ENCODE measurements at regions of chr7 and their contacts with region 1.

Region 1: GRCh38 chr7:102050864-102051460 is 233.5 kb downstream of the CUX1 start:
- DNase-seq: no peak
- ATAC-seq: no peak
- H3K4me3 ChIP-seq: no peak overlapping the region
- H3K4me3 Mint-ChIP-seq: no peak overlapping the region
- H3K27ac ChIP-seq: no peak overlapping the region
- H3K27ac Mint-ChIP-seq: no peak overlapping the region
- H3K4me1 ChIP-seq: peaks cover 0 to 2% of the 10 kb centered on the region in 2 donors
- H3K4me1 Mint-ChIP-seq: peaks cover 41% of the 10 kb centered on the region
- H3K27me3 ChIP-seq: no peaks in the 10 kb centered on the region
- H3K27me3 Mint-ChIP-seq: no peaks in the 10 kb centered on the region
- CTCF ChIP-seq: no peak

Region 2: GRCh38 chr7:101941481-101942383 is 109.2 kb before region 1 on chr7:
- CTCF ChIA-PET with region 1: no interaction called
- POLR2A ChIA-PET with region 1: no interaction called
- intact Hi-C with region 1: no loop called
- DNase-seq: no peak
- ATAC-seq: no peak
- H3K4me3 ChIP-seq: no peak overlapping the region
- H3K4me3 Mint-ChIP-seq: no peak overlapping the region
- H3K27ac ChIP-seq: no peak overlapping the region
- H3K27ac Mint-ChIP-seq: no peak overlapping the region
- H3K4me1 ChIP-seq: peaks cover 4 to 10% of the 10 kb centered on the region in 2 donors
- H3K4me1 Mint-ChIP-seq: peaks cover 20% of the 10 kb centered on the region
- H3K27me3 ChIP-seq: no peaks in the 10 kb centered on the region
- H3K27me3 Mint-ChIP-seq: no peaks in the 10 kb centered on the region
- CTCF ChIP-seq: no peak

Region 3: DNA sequence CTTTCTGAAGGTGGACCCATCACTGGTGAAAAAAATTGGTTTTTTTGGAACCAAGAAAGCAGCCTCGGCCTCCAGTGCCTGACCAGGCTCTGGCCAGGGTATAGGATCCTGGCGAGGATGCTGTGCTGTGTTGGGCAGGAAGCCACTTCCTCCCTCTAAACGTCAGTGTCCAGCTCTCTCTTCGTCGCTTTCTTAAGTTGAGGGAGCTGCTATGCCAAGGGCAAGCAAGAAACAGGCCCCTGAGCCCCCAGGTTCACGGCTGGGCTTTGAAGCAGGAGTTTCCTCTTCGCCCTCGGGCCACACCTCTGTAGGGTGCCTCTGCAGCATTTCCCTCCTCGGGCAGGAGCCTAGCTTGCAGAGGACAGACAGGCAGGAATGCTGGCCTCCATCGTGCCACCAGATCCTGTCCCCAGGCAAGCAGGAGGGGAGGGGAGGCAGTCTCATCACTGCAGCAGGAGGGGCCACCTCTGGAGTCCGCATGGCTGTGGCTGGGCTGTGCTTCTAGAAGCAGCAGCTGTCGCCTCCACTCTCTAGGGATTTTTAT is 52.2 kb before region 1 on chr7:
- CTCF ChIA-PET with region 1: no interaction called
- POLR2A ChIA-PET with region 1: no interaction called
- intact Hi-C with region 1: no loop called
- DNase-seq: no peak
- ATAC-seq: no peak
- H3K4me3 ChIP-seq: no peak overlapping the region
- H3K4me3 Mint-ChIP-seq: no peak overlapping the region
- H3K27ac ChIP-seq: no peak overlapping the region
- H3K27ac Mint-ChIP-seq: no peak overlapping the region
- H3K4me1 ChIP-seq: peaks cover 6 to 35% of the 10 kb centered on the region in 2 donors
- H3K4me1 Mint-ChIP-seq: peaks cover 32% of the 10 kb centered on the region
- H3K27me3 ChIP-seq: no peaks in the 10 kb centered on the region
- H3K27me3 Mint-ChIP-seq: no peaks in the 10 kb centered on the region
- CTCF ChIP-seq: no peak

Region 4: GRCh38 chr7:102175423-102176170 is 124.6 kb after region 1 on chr7:
- CTCF ChIA-PET with region 1: no interaction called
- POLR2A ChIA-PET with region 1: interaction called, 12 read pairs
- intact Hi-C with region 1: no loop called
- DNase-seq: no peak
- ATAC-seq: no peak
- H3K4me3 ChIP-seq: no peak overlapping the region
- H3K4me3 Mint-ChIP-seq: no peak overlapping the region
- H3K27ac ChIP-seq: no peak overlapping the region
- H3K27ac Mint-ChIP-seq: no peak overlapping the region
- H3K4me1 ChIP-seq: no peaks in the 10 kb centered on the region
- H3K4me1 Mint-ChIP-seq: no peaks in the 10 kb centered on the region
- H3K27me3 ChIP-seq: no peaks in the 10 kb centered on the region
- H3K27me3 Mint-ChIP-seq: no peaks in the 10 kb centered on the region
- CTCF ChIP-seq: no peak